ENCODE measurements at regions of chr12 and their contacts with region 1.

Region 1: DNA sequence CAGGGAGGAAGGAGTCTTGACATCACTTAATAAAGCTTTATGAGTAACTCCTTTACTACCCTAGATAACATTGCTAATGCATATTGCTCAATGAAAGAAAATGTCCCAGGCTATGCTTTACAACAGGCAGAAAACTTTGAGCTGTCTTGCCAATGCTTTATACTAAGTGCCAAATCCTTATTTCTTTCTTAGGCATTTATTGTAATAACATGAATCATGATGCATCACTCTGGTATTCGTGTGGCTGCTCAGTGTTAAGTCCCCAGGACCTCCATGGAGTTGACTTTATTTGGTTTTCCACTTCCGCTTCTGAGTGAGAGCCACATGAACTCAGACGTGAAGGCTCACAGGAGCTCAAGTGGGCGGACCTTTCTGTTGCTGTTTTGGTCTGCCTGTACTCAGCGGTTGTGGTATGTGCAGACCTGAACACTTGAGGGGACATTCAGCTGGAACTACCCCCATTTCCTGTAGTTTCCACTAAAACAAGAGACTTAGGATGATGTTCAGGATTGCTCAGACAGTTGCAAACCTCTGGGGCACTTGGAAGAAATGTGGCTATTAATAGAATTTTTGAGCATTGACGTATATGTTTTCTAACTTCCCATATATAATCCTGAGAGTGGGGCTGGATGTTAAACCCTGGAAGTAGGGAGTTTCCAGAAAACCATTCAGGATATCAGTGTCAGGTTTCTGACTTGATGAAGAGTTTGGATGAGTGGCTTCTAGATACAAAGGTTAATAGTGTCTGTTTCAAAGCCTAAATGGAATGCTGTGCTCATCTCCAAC is 258.6 kb downstream of the MSRB3 start:
- DNase-seq: peak; percentile 99
- ATAC-seq: peak; percentile 75
- H3K4me3 ChIP-seq: peak overlapping the region; percentile 3; the same call in 1 of the 2 replicates
- H3K27ac ChIP-seq: peak overlapping the region; percentile 89
- H3K4me1 ChIP-seq: peaks cover 58% of the 10 kb centered on the region
- H3K27me3 ChIP-seq: no peaks in the 10 kb centered on the region
- CTCF ChIP-seq: no peak

Region 2: GRCh38 chr12:65313719-65314317 is 223.3 kb before region 1 on chr12:
- CTCF ChIA-PET with region 1: interaction called, 3 read pairs
- POLR2A ChIA-PET with region 1: no interaction called
- intact Hi-C with region 1: loop called (anchors 2 kb)
- DNase-seq: peak; percentile 79
- ATAC-seq: peak; percentile 46; the same call in 1 of the 2 replicates
- H3K4me3 ChIP-seq: no peak overlapping the region; the same call in 1 of the 2 replicates
- H3K27ac ChIP-seq: peak overlapping the region; percentile 30
- H3K4me1 ChIP-seq: peaks cover 24% of the 10 kb centered on the region
- H3K27me3 ChIP-seq: no peaks in the 10 kb centered on the region
- CTCF ChIP-seq: peak; percentile 91

Region 3: DNA sequence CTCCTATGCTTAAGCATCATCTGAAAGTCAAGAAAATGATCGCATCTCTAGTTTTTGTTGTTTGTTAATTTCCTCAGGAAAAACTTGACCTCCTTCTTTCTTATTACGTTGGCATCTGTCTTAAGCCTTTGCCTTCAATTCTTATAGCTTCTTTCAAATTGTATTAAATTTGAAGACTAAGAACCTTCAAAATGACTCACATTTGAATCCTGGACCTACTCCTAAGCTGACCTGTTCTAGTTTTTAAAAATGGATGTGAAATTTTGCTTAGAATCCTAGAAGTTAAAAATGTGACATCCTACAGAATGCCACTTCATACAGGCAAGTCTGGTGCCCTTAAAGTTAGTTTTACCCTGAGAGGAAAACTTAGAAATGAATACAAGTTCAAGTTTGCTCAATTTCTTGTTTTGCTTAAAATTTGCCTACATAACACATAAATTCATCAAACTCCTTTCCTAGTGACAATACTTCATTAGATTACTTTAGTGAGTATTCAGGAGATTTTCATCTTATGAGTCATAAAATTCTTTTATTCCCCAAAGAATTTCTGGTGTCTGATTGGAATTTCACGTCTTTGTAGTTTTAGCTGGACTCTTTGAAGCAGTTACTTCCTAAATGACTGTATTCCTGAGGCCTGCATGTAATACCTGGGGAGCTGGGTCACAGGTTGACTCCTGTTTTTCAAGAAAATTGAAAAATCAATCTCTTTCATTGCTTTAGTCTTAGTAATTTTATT is 106.3 kb before region 1 on chr12:
- CTCF ChIA-PET with region 1: interaction called, 3 read pairs
- POLR2A ChIA-PET with region 1: no interaction called
- intact Hi-C with region 1: loop called (anchors 1 kb)
- DNase-seq: peak; percentile 94
- ATAC-seq: peak; percentile 92
- H3K4me3 ChIP-seq: peak overlapping the region; percentile 14; the same call in 1 of the 2 replicates
- H3K27ac ChIP-seq: peak overlapping the region; percentile 56
- H3K4me1 ChIP-seq: peaks cover 47% of the 10 kb centered on the region
- H3K27me3 ChIP-seq: no peaks in the 10 kb centered on the region
- CTCF ChIP-seq: no peak

Region 4: DNA sequence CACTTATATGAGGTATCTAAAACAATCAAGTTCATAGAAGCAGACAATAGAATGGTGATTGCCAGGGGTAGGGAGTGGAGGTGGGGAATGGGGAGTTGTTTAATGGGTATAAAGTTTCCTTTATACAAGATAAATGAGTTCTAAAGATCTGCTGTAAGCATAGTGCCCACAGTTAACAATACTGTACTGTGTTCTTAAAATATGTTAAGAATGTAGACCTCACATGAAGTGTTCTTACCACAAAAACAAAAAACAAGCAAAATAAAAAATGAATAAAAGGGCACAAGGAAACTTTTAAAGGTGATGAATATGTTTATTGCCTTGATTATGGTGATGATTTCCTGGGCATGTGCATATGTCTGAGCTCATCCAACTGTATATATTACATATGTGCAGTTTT is 46.8 kb before region 1 on chr12:
- CTCF ChIA-PET with region 1: no interaction called
- POLR2A ChIA-PET with region 1: no interaction called
- intact Hi-C with region 1: loop called (anchors 2 kb)
- DNase-seq: peak; percentile 35
- ATAC-seq: peak; percentile 76
- H3K4me3 ChIP-seq: no peak overlapping the region
- H3K27ac ChIP-seq: no peak overlapping the region
- H3K4me1 ChIP-seq: peaks cover 14% of the 10 kb centered on the region
- H3K27me3 ChIP-seq: no peaks in the 10 kb centered on the region
- CTCF ChIP-seq: no peak